CD4-positive, alpha-beta memory T cell (primary cell): ENCODE measurements at regions of chr21 and their contacts with region 1.

Region 1: DNA sequence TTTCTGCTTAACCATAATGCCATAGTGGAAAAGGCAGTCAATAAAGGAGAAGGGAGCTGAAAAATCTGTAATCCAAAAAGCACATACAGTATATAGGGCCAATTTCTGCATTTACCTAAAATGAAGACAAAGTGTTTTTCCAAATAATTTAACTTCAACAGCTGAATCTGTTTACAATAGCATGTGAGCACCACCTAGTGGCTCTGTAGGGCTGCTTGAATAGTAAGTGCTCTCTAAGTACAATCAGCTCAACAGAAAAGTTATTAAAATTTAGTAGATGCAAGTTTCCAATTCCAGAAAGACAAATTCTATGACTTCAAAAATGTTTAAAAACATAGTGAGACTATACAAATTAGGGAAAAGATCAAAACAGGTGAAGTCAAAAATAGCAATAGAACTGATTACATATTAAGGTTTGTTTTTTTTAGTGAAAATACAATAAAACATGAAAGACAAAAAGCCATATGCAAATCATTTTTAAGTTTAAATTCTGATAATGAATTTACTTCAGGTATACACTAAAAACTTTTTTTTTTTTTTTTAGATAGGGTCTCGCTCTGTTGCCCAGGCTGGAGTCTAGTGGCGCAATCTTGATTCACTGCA is 220.0 kb downstream of the SETD4 start:
- DNase-seq: peak; percentile 43 to 53 (median 44)
- H3K4me3 ChIP-seq: no peak overlapping the region
- H3K4me3 Mint-ChIP-seq: no peak overlapping the region
- H3K27ac ChIP-seq: no peak overlapping the region
- H3K27ac Mint-ChIP-seq: no peak overlapping the region
- H3K4me1 ChIP-seq: no peaks in the 10 kb centered on the region
- H3K4me1 Mint-ChIP-seq: no peaks in the 10 kb centered on the region
- H3K27me3 ChIP-seq: no peaks in the 10 kb centered on the region
- H3K27me3 Mint-ChIP-seq: peaks cover 0 to 6% of the 10 kb centered on the region in 2 donors

Region 2: DNA sequence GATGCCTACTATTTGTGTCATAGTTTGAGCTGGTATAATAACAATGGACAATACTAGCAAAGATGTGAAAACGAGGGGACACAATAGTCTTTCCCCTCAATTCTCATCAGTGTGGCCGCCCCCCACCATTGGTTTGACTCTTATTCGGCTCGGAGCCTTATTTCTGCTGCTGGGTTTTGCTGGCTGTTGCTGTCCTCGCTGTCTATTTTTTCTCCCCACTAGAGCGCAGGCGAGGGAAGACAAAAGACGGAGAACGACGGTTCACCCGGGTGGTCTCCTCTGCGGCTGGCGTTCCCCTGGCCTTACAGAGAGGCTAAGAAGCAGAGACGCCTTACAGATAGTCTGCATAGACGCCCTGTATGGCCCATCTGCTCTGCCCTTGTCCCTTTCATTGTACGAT is 1152.2 kb before region 1 on chr21:
- CTCF ChIA-PET with region 1: interaction called, 43 read pairs
- POLR2A ChIA-PET with region 1: no interaction called
- intact Hi-C with region 1: no loop called
- DNase-seq: peak in 1 of 5 donors; percentile 47
- H3K4me3 ChIP-seq: no peak overlapping the region
- H3K4me3 Mint-ChIP-seq: no peak overlapping the region
- H3K27ac ChIP-seq: no peak overlapping the region
- H3K27ac Mint-ChIP-seq: no peak overlapping the region
- H3K4me1 ChIP-seq: no peaks in the 10 kb centered on the region
- H3K4me1 Mint-ChIP-seq: no peaks in the 10 kb centered on the region
- H3K27me3 ChIP-seq: peaks cover 3% of the 10 kb centered on the region
- H3K27me3 Mint-ChIP-seq: peaks cover 14 to 34% of the 10 kb centered on the region in 2 donors

Region 3: GRCh38 chr21:34693192-34693810 is 1147.0 kb before region 1 on chr21:
- CTCF ChIA-PET with region 1: interaction called, 43 read pairs
- POLR2A ChIA-PET with region 1: no interaction called
- intact Hi-C with region 1: no loop called
- DNase-seq: peak in 4 of 5 donors; percentile 42 to 57 (median 50)
- H3K4me3 ChIP-seq: no peak overlapping the region
- H3K4me3 Mint-ChIP-seq: no peak overlapping the region
- H3K27ac ChIP-seq: no peak overlapping the region
- H3K27ac Mint-ChIP-seq: no peak overlapping the region
- H3K4me1 ChIP-seq: no peaks in the 10 kb centered on the region
- H3K4me1 Mint-ChIP-seq: peaks cover 0 to 4% (median 0%) of the 10 kb centered on the region in 4 donors
- H3K27me3 ChIP-seq: no peaks in the 10 kb centered on the region
- H3K27me3 Mint-ChIP-seq: peaks cover 13 to 27% of the 10 kb centered on the region in 2 donors

Region 4: GRCh38 chr21:34745557-34746255 is 1094.6 kb before region 1 on chr21:
- CTCF ChIA-PET with region 1: interaction called, 66 read pairs
- POLR2A ChIA-PET with region 1: no interaction called
- intact Hi-C with region 1: no loop called
- DNase-seq: peak; percentile 43 to 63 (median 53)
- H3K4me3 ChIP-seq: no peak overlapping the region
- H3K4me3 Mint-ChIP-seq: peak overlapping the region in 3 of 8 donors; percentile 17 to 55 (median 50)
- H3K27ac ChIP-seq: no peak overlapping the region
- H3K27ac Mint-ChIP-seq: no peak overlapping the region
- H3K4me1 ChIP-seq: peaks cover 8% of the 10 kb centered on the region
- H3K4me1 Mint-ChIP-seq: peaks cover 0 to 4% (median 2%) of the 10 kb centered on the region in 4 donors
- H3K27me3 ChIP-seq: no peaks in the 10 kb centered on the region
- H3K27me3 Mint-ChIP-seq: peaks cover 7 to 8% of the 10 kb centered on the region in 2 donors

Region 5: DNA sequence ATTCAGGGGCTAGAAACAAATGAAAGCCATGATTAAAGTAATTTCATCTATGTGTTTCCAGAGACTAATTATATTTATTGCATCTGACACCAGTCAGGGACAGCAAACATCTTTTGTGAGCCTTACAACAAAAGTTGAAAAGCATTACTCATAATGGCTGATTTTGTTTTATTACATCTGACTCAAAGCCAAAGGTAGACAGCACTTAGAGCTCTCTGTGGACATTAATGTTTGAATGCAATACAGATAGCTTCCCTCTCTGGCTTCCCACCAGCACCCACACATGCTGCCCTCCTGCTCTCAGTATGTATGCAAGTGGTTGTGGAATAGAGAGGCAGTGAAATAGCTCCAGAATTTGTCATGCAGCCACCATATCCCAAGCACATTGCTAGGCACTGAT is 21.4 kb after region 1 on chr21:
- CTCF ChIA-PET with region 1: no interaction called
- POLR2A ChIA-PET with region 1: no interaction called
- intact Hi-C with region 1: no loop called
- DNase-seq: no peak
- H3K4me3 ChIP-seq: no peak overlapping the region
- H3K4me3 Mint-ChIP-seq: no peak overlapping the region
- H3K27ac ChIP-seq: no peak overlapping the region
- H3K27ac Mint-ChIP-seq: no peak overlapping the region
- H3K4me1 ChIP-seq: no peaks in the 10 kb centered on the region
- H3K4me1 Mint-ChIP-seq: no peaks in the 10 kb centered on the region
- H3K27me3 ChIP-seq: no peaks in the 10 kb centered on the region
- H3K27me3 Mint-ChIP-seq: peaks cover 9 to 16% of the 10 kb centered on the region in 2 donors